Adrenal gland (tissue), 19 donors: ENCODE measurements at regions of chr11 and their contacts with region 1.

Region 1: GRCh38 chr11:33682446-33682845 is 18.2 kb downstream of the C11orf91 start:
- DNase-seq: no peak
- H3K4me3 ChIP-seq: no peak overlapping the region
- H3K27ac ChIP-seq: no peak overlapping the region
- H3K4me1 ChIP-seq: no peaks in the 10 kb centered on the region
- H3K27me3 ChIP-seq: no peaks in the 10 kb centered on the region
- CTCF ChIP-seq: no peak
- POLR2A ChIP-seq: no peak

Region 2: GRCh38 chr11:33373636-33374035 is 308.8 kb before region 1 on chr11:
- intact Hi-C with region 1: loop called in 1 of 2 experiments (anchors 5 kb)
- DNase-seq: no peak
- H3K4me3 ChIP-seq: no peak overlapping the region
- H3K27ac ChIP-seq: no peak overlapping the region
- H3K4me1 ChIP-seq: peaks cover 0 to 7% of the 10 kb centered on the region in 2 donors
- H3K27me3 ChIP-seq: peaks cover 34% of the 10 kb centered on the region
- CTCF ChIP-seq: no peak
- POLR2A ChIP-seq: no peak